ENCODE measurements at regions of chr5 and their contacts with region 1.

Region 1: DNA sequence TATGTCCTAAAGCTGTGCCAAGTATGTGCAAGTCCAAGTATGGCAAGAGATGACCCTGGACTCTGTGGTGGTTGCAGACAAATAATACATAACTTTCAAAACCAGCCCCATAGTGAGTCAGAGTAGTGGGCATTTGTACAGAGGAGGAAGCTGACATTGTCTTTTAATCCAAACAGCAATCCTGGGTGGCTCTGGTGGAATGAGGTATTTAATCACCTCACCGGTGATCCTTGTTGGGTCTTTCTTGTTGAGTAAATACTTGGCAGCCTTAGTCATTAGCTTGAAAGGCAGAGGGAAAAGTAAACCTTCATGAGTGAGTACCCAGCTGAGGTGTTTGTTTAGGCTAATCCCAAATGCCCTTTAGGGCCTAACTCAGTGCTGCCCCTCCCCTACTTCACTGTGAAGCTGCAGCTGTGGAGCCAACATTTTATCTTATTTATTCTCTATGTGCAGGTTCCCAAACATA is 148.7 kb upstream of the SLC12A2 start:
- DNase-seq: peak; percentile 99
- ATAC-seq: peak; percentile 94
- H3K4me3 ChIP-seq: no peak overlapping the region
- H3K27ac ChIP-seq: peak overlapping the region; percentile 89
- H3K4me1 ChIP-seq: peaks cover 41% of the 10 kb centered on the region
- H3K27me3 ChIP-seq: no peaks in the 10 kb centered on the region
- CTCF ChIP-seq: peak; percentile 60

Region 2: DNA sequence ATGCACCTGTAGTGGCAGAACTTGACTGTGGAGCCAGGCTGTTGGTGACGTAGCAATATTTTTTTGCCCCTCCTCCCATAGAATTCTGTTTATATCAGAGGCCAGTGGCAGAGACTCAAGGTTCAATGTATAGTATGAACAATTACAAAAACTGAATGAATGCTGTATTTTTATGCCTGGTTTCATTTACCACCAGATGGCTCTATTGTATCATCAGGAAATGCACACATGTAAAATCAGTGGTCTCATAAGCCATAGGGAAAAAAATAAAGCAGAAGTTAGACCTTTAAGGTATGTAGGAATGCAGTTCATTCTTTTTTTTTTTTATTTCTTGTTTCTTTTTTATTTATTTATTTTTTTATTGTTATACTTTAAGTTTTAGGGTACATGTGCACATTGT is 188.1 kb before region 1 on chr5:
- CTCF ChIA-PET with region 1: no interaction called
- POLR2A ChIA-PET with region 1: no interaction called
- intact Hi-C with region 1: no loop called
- DNase-seq: peak; percentile 69
- ATAC-seq: peak; percentile 92
- H3K4me3 ChIP-seq: no peak overlapping the region
- H3K27ac ChIP-seq: no peak overlapping the region
- H3K4me1 ChIP-seq: no peaks in the 10 kb centered on the region
- H3K27me3 ChIP-seq: peaks cover 20% of the 10 kb centered on the region
- CTCF ChIP-seq: peak; percentile 81

Region 3: DNA sequence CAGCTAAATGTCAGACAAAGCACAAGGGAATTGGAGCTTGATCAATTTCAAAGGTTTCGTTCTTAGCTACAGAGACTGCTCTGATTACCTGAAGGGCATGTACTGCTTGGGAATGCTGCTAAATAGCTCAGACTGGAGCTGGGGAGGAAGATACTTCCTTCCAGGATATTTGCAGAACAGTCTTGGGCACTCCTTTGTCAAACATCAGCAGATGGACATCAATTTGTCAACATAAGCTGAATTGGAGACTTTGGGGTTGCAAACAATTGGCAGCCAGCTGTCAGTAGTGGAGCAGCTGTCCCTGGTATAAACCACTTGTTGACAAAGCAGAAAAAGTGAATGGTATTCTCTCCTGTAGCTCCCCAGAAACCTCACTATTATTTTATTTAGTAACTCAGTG is 49.6 kb before region 1 on chr5:
- CTCF ChIA-PET with region 1: no interaction called
- POLR2A ChIA-PET with region 1: no interaction called
- intact Hi-C with region 1: loop called (anchors 2 kb)
- DNase-seq: peak; percentile 49
- ATAC-seq: peak; percentile 97
- H3K4me3 ChIP-seq: no peak overlapping the region
- H3K27ac ChIP-seq: no peak overlapping the region
- H3K4me1 ChIP-seq: 0 out of 2 replicates have a peak, but pooled peaks cover 6% of the 10 kb centered on the region
- H3K27me3 ChIP-seq: no peaks in the 10 kb centered on the region
- CTCF ChIP-seq: no peak

Region 4: GRCh38 chr5:127909078-127909477 is 25.7 kb before region 1 on chr5:
- CTCF ChIA-PET with region 1: no interaction called
- POLR2A ChIA-PET with region 1: no interaction called
- intact Hi-C with region 1: loop called (anchors 1 kb)
- DNase-seq: peak; percentile 78
- ATAC-seq: peak; percentile 73
- H3K4me3 ChIP-seq: no peak overlapping the region
- H3K27ac ChIP-seq: no peak overlapping the region
- H3K4me1 ChIP-seq: peaks cover 8% of the 10 kb centered on the region
- H3K27me3 ChIP-seq: no peaks in the 10 kb centered on the region
- CTCF ChIP-seq: peak; percentile 89

Region 5: GRCh38 chr5:127967980-127968592 is 33.3 kb after region 1 on chr5:
- CTCF ChIA-PET with region 1: no interaction called
- POLR2A ChIA-PET with region 1: no interaction called
- intact Hi-C with region 1: loop called (anchors 1 kb)
- DNase-seq: no peak
- ATAC-seq: peak; percentile 61; the same call in 1 of the 2 replicates
- H3K4me3 ChIP-seq: no peak overlapping the region
- H3K27ac ChIP-seq: peak overlapping the region; percentile 94
- H3K4me1 ChIP-seq: peaks cover 23% of the 10 kb centered on the region
- H3K27me3 ChIP-seq: no peaks in the 10 kb centered on the region
- CTCF ChIP-seq: no peak

Region 6: GRCh38 chr5:128111818-128112448 is 177.1 kb after region 1 on chr5:
- CTCF ChIA-PET with region 1: no interaction called
- POLR2A ChIA-PET with region 1: no interaction called
- intact Hi-C with region 1: no loop called
- DNase-seq: peak; percentile 57
- ATAC-seq: peak; percentile 70
- H3K4me3 ChIP-seq: no peak overlapping the region
- H3K27ac ChIP-seq: no peak overlapping the region
- H3K4me1 ChIP-seq: peaks cover 6% of the 10 kb centered on the region; the same call in 1 of the 2 replicates
- H3K27me3 ChIP-seq: no peaks in the 10 kb centered on the region
- CTCF ChIP-seq: no peak

Measured in PC-3 (cell line).